IMR-90 (cell line): ENCODE measurements at regions of chr7 and their contacts with region 1.

Region 1: DNA sequence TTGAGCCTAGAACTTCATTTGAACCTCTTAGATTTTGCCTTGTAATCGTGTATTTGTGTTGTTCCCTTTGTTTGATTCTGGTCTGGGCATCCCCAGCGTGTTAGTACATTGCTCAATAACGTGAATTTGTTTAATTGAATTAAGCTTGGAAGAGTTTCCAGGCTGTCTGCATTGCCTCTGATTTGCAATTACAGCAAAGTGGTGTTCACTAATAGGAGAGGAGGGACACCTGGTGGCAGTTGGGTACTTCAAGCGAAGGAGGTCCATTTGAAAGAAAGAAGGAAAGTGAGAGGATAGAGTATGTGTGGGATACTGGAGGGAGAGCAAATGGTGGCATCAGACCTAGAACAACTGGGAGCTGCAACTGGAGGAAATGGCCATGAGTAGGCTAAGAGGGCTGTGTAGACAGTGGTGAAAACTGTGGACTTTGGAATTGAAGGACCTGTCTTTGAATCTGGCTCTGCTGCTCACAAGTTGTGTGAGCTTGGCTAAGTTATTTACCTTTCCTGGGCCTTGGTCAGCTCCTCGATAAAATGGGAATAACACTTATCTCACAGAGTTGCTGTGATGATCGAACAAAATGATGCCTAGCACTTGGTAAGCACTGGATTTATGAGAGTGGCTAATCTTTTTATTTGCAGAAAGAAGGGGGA is 15.1 kb downstream of the LSMEM1 start:
- DNase-seq: peak; percentile 64
- ATAC-seq: peak; percentile 85
- H3K4me3 ChIP-seq: no peak overlapping the region
- H3K27ac ChIP-seq: no peak overlapping the region
- H3K4me1 ChIP-seq: no peaks in the 10 kb centered on the region
- H3K27me3 ChIP-seq: no peaks in the 10 kb centered on the region
- CTCF ChIP-seq: peak; percentile 69
- POLR2A ChIP-seq: no peak
- RAD21 ChIP-seq: peak; percentile 72

Region 2: DNA sequence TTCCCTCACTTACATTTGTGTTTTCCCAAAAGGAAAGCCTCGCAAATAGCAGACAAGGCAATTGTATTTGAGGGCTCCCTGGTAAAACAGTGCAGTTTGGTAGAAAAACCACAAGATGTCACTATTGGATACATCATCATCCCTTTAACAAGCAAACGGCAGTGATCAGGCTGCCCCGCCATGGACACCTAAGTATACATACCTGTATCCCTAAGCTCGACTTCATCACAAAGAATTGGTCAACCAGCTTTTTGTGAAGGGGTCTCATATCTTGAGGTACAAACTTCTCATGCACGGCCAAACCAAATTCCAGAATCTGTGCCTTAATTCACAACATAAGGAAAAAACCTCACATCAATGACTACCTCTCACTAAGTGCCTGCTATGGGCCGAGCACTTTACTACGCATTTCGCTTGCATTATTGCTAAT is 754.1 kb before region 1 on chr7:
- CTCF ChIA-PET with region 1: interaction called, 4 read pairs
- POLR2A ChIA-PET with region 1: no interaction called
- dilution Hi-C with region 1: no loop called
- in situ Hi-C with region 1: loop called (anchors 10 kb)
- intact Hi-C with region 1: loop called (anchors 5 kb)
- DNase-seq: peak; percentile 76
- ATAC-seq: peak; percentile 89
- H3K4me3 ChIP-seq: no peak overlapping the region
- H3K27ac ChIP-seq: no peak overlapping the region
- H3K4me1 ChIP-seq: peaks cover 2% of the 10 kb centered on the region; the same call in 1 of the 2 replicates
- H3K27me3 ChIP-seq: no peaks in the 10 kb centered on the region
- CTCF ChIP-seq: peak; percentile 80
- POLR2A ChIP-seq: no peak
- RAD21 ChIP-seq: peak; percentile 83

Region 3: DNA sequence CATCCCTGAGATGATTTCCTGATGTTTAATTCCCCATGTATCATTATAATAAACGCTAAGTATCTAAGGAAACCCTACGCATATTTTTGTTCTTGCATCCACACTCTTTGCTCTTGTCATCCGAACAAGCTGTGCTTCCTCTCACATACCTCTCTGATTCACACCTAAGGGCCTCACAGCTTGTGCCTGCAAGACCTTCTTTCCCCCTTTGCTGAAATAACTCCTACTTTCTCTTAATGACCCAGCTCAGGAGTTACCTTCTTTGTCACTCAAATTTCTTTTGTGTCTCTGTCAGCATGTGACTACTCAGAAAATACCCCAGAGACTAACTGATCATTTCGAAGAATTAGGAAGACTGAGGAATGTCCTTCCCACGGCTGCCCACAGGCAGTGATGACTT is 724.3 kb before region 1 on chr7:
- CTCF ChIA-PET with region 1: no interaction called
- POLR2A ChIA-PET with region 1: no interaction called
- dilution Hi-C with region 1: no loop called
- in situ Hi-C with region 1: no loop called
- intact Hi-C with region 1: no loop called
- DNase-seq: no peak
- ATAC-seq: no peak
- H3K4me3 ChIP-seq: no peak overlapping the region
- H3K27ac ChIP-seq: no peak overlapping the region
- H3K4me1 ChIP-seq: no peaks in the 10 kb centered on the region
- H3K27me3 ChIP-seq: no peaks in the 10 kb centered on the region
- CTCF ChIP-seq: no peak
- POLR2A ChIP-seq: no peak
- RAD21 ChIP-seq: no peak